OCI-LY7 (cell line): ENCODE measurements at regions of chr3 and their contacts with region 1.

Region 1: DNA sequence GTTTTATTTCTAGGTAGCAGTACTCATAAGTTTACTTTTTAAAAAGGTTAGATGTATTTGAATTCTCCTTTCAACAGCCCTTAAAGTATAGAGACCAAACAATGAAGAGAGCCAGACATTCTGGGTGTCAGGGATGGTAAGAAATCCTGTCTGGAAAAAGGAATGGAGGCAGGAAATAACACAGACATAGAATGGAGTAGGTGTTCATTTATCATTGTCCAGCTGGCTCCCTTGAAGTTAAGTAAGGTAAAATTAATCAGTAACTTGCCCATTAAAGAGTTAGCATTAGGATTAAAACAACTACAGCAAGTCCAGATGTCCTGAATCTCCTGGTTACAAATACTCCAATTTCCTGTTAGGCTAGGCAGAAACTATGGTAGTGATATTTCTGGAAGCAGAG is 13.5 kb upstream of the SUCNR1 start:
- DNase-seq: no peak
- H3K4me3 ChIP-seq: no peak overlapping the region
- H3K27ac ChIP-seq: no peak overlapping the region
- H3K4me1 ChIP-seq: no peaks in the 10 kb centered on the region
- CTCF ChIP-seq: no peak

Region 2: GRCh38 chr3:151686257-151686656 is 173.6 kb before region 1 on chr3:
- CTCF ChIA-PET with region 1: no interaction called
- POLR2A ChIA-PET with region 1: no interaction called
- intact Hi-C with region 1: no loop called
- DNase-seq: no peak
- H3K4me3 ChIP-seq: no peak overlapping the region
- H3K27ac ChIP-seq: no peak overlapping the region
- H3K4me1 ChIP-seq: no peaks in the 10 kb centered on the region
- CTCF ChIP-seq: no peak

Region 3: DNA sequence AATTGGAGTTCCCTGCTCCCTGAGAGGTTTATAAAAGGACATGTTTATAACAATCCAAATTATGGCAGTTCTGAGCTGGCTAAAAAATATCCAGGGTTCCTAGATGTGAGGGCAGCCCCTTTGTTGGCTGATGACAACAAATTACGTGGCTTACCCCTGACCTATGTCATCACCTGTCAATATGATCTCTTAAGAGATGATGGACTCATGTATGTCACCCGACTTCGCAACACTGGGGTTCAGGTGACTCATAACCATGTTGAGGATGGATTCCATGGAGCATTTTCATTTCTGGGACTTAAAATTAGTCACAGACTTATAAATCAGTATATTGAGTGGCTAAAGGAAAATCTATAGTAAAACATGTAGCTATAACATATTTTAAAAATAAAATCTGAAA is 32.1 kb before region 1 on chr3:
- CTCF ChIA-PET with region 1: no interaction called
- POLR2A ChIA-PET with region 1: no interaction called
- intact Hi-C with region 1: loop called (anchors 1 kb)
- DNase-seq: no peak
- H3K4me3 ChIP-seq: no peak overlapping the region
- H3K27ac ChIP-seq: no peak overlapping the region
- H3K4me1 ChIP-seq: no peaks in the 10 kb centered on the region
- CTCF ChIP-seq: no peak